ENCODE measurements at regions of chr19 and their contacts with region 1.

Region 1: GRCh38 chr19:3429581-3430080 is 50.7 kb downstream of the SMIM24 start:
- DNase-seq: peak; percentile 93
- H3K4me3 ChIP-seq: no peak overlapping the region
- H3K27ac ChIP-seq: peak overlapping the region in 7 of 8 donors; percentile 8 to 94 (median 81)
- H3K4me1 ChIP-seq: peaks cover 29 to 68% (median 47%) of the 10 kb centered on the region in 6 donors
- H3K27me3 ChIP-seq: no peaks in the 10 kb centered on the region
- CTCF ChIP-seq: peak; percentile 93 to 100 (median 98)
- POLR2A ChIP-seq: no peak

Region 2: DNA sequence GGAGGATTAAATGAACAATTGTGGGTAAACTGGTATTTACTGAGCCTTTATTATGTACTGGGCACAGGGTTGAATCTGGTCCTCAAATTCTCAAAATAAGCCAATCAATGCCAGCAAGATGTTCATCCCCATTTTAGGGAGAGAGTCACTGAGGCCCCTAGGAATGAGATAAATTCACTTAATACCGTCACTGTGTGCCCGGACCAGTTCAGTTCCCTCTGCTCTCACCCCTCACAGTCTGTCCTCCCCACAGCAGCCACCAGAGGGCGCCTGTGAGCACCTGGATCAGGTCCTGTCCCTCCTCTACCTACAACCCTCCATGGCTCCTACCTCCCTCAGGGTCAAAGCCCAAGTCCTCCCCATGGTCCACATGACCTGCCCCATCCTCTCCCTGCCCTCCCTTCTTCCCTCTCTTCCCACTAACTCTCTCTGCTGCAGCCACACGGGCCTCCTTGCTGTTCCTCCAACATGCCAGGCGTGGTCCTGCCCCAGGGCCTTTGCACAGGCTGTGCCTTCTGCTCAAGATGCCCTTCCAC is 105.2 kb before region 1 on chr19:
- intact Hi-C with region 1: loop called (anchors 2 kb)
- DNase-seq: peak; percentile 91
- H3K4me3 ChIP-seq: no peak overlapping the region
- H3K27ac ChIP-seq: no peak overlapping the region
- H3K4me1 ChIP-seq: peaks cover 0 to 6% (median 0%) of the 10 kb centered on the region in 6 donors
- H3K27me3 ChIP-seq: peaks cover 0 to 26% (median 14%) of the 10 kb centered on the region in 7 donors
- CTCF ChIP-seq: peak; percentile 35 to 88 (median 74)
- POLR2A ChIP-seq: no peak

Region 3: DNA sequence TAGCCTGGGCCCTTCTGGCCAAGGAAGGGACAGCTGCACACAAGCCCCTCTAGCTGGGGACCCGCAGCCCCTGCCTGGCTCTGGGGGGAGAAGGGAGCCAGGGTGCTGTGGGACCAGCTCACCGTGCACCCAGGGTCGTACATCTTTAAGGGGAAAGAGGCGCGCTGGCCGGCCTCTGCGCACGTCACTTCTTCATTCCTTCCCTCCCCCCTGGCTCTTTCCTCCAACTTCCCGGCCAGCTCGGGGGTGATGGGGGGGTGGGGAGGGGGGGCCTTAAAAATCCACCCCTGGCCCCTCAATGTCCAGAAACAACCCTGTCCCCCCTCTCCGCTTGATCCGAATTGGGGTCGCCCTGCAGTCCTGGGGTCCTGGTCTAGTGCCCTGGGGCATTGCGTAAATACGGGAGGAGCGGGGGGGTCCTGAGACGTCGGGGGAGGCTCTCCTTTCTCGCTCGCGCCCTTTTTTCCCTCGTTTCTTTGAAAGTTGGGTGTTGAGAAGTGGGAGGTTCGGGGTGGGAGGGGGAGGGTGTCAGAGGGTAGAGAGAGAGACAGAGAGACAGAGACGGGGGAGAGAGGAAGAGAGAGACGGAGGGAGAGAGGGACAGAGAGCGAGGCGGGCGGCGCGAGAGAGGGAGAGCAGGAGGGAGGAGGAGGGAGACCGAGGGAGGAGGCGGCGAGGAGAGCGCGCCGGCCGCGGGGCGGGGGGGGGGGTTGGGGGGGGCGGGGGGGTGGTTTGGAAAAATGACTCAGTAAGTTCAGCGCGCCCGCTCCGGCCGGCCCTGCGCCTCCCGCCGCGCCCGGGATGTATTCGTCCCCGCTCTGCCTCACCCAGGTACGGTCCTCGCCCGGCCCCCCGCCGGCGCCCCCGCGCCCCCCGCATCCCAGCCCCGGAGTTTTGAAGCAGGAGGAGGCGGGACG is 63.5 kb before region 1 on chr19 and contains the start of gene NFIC:
- intact Hi-C with region 1: loop called (anchors 10 kb)
- DNase-seq: peak; percentile 87
- H3K4me3 ChIP-seq: peak within 1 kb of the TSS; percentile 52 to 84 (median 64)
- H3K27ac ChIP-seq: peak within 1 kb of the TSS; percentile 77 to 96 (median 92)
- H3K4me1 ChIP-seq: peaks cover 23 to 96% (median 76%) of the 10 kb centered on the region in 6 donors
- H3K27me3 ChIP-seq: peaks cover 0 to 21% (median 0%) of the 10 kb centered on the region in 7 donors
- CTCF ChIP-seq: no peak
- POLR2A ChIP-seq: no peak
- total RNA-seq, gene NFIC: 65.4 to 125 (median 77.1) TPM

Region 4: GRCh38 chr19:3398114-3398899 is 31.3 kb before region 1 on chr19:
- intact Hi-C with region 1: no loop called
- DNase-seq: peak; percentile 83
- H3K4me3 ChIP-seq: peak overlapping the region in 5 of 8 donors; percentile 5 to 40 (median 9)
- H3K27ac ChIP-seq: peak overlapping the region; percentile 61 to 86 (median 73)
- H3K4me1 ChIP-seq: peaks cover 12 to 80% (median 52%) of the 10 kb centered on the region in 6 donors
- H3K27me3 ChIP-seq: no peaks in the 10 kb centered on the region
- CTCF ChIP-seq: no peak
- POLR2A ChIP-seq: peak in 1 of 3 donors; percentile 15